ENCODE measurements at regions of chr5 and their contacts with region 1.

Region 1: GRCh38 chr5:95781101-95781583 is 41.4 kb downstream of the GLRX start:
- DNase-seq: peak; percentile 57 to 87 (median 66)
- ATAC-seq: peak; percentile 94
- H3K4me3 ChIP-seq: no peak overlapping the region
- H3K4me3 Mint-ChIP-seq: peak overlapping the region; percentile 68
- H3K27ac ChIP-seq: no peak overlapping the region
- H3K27ac Mint-ChIP-seq: peak overlapping the region; percentile 26
- H3K4me1 ChIP-seq: no peaks in the 10 kb centered on the region
- H3K4me1 Mint-ChIP-seq: peaks cover 5% of the 10 kb centered on the region
- H3K27me3 ChIP-seq: no peaks in the 10 kb centered on the region
- H3K27me3 Mint-ChIP-seq: no peaks in the 10 kb centered on the region
- CTCF ChIP-seq: peak; percentile 100

Region 2: GRCh38 chr5:94945656-94946055 is 835.5 kb before region 1 on chr5:
- CTCF ChIA-PET with region 1: no interaction called
- POLR2A ChIA-PET with region 1: no interaction called
- intact Hi-C with region 1: no loop called
- DNase-seq: peak in 1 of 14 experiments; percentile 5
- ATAC-seq: no peak
- H3K4me3 ChIP-seq: no peak overlapping the region
- H3K4me3 Mint-ChIP-seq: no peak overlapping the region
- H3K27ac ChIP-seq: no peak overlapping the region
- H3K27ac Mint-ChIP-seq: no peak overlapping the region
- H3K4me1 ChIP-seq: no peaks in the 10 kb centered on the region
- H3K4me1 Mint-ChIP-seq: no peaks in the 10 kb centered on the region
- H3K27me3 ChIP-seq: no peaks in the 10 kb centered on the region
- H3K27me3 Mint-ChIP-seq: no peaks in the 10 kb centered on the region
- CTCF ChIP-seq: no peak

Region 3: DNA sequence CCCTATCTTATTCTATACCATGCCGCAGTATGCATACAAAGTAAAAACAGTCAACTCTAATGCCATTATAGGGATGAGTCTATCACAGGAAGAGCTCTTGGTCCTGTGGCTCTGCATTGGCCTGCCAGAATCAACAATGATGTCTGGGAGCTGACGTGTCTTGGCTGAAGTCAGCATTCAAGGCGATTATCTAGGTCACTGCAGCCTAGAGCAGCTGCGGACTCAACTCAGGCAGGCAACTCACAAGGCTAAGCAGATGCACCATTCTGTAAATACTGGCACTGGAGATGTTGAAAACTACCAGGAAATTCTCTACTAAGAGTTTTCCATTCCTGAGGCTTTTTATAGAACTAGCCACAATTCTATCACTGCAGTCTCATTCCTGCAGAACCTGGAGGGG is 111.6 kb before region 1 on chr5:
- CTCF ChIA-PET with region 1: interaction called, 4 read pairs
- POLR2A ChIA-PET with region 1: interaction called, 4 read pairs
- intact Hi-C with region 1: loop called (anchors 2 to 5 kb)
- DNase-seq: no peak
- ATAC-seq: no peak
- H3K4me3 ChIP-seq: no peak overlapping the region
- H3K4me3 Mint-ChIP-seq: no peak overlapping the region
- H3K27ac ChIP-seq: no peak overlapping the region
- H3K27ac Mint-ChIP-seq: no peak overlapping the region
- H3K4me1 ChIP-seq: no peaks in the 10 kb centered on the region
- H3K4me1 Mint-ChIP-seq: no peaks in the 10 kb centered on the region
- H3K27me3 ChIP-seq: no peaks in the 10 kb centered on the region
- H3K27me3 Mint-ChIP-seq: no peaks in the 10 kb centered on the region
- CTCF ChIP-seq: no peak

Region 4: DNA sequence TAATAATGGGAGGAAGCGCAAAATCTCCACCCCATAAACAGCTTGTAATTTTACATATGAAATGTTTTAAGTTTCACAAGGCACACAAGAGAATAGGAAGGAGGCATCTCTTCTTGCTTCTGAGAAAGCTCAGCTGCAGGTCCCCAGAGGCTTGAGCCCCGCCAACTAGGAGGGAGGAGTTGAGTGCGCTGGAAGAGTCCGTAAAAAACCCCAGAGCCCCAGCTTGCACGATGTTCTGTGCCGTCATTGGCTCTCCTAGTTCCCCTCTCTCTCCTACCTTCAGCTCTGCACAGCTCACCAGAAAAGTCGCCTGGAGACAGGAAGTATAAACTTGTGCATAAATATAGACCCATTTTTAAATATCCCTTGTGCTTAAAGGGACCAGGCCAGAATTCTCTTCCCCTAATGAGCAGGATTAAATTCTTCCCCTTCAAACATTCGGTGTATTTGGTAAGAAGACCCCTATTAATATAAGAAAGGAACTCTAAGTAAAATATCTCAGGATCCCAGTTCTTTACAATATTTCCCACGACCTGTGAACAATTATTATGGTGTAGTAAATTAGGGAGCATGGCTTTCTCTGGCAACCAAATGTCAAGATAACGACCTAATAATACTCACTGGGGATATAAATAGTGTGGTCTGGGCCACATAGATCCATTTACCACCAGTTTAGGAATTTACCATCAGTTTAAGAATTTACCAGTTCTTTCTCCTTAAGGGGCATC is 27.7 kb after region 1 on chr5:
- CTCF ChIA-PET with region 1: interaction called, 28 read pairs
- POLR2A ChIA-PET with region 1: interaction called, 14 read pairs
- intact Hi-C with region 1: no loop called
- DNase-seq: peak; percentile 59 to 94 (median 76)
- ATAC-seq: peak; percentile 100
- H3K4me3 ChIP-seq: peak overlapping the region; percentile 9
- H3K4me3 Mint-ChIP-seq: peak overlapping the region; percentile 26
- H3K27ac ChIP-seq: peak overlapping the region; percentile 63 to 79
- H3K27ac Mint-ChIP-seq: peak overlapping the region; percentile 76
- H3K4me1 ChIP-seq: peaks cover 59% of the 10 kb centered on the region
- H3K4me1 Mint-ChIP-seq: peaks cover 65% of the 10 kb centered on the region
- H3K27me3 ChIP-seq: no peaks in the 10 kb centered on the region
- H3K27me3 Mint-ChIP-seq: no peaks in the 10 kb centered on the region
- CTCF ChIP-seq: no peak

Region 5: GRCh38 chr5:95846554-95847260 is 65.6 kb after region 1 on chr5:
- CTCF ChIA-PET with region 1: interaction called, 79 read pairs
- POLR2A ChIA-PET with region 1: interaction called, 16 read pairs
- intact Hi-C with region 1: loop called (anchors 1 kb)
- DNase-seq: peak; percentile 54 to 87 (median 61)
- ATAC-seq: peak; percentile 82
- H3K4me3 ChIP-seq: no peak overlapping the region
- H3K4me3 Mint-ChIP-seq: no peak overlapping the region
- H3K27ac ChIP-seq: no peak overlapping the region
- H3K27ac Mint-ChIP-seq: no peak overlapping the region
- H3K4me1 ChIP-seq: peaks cover 20% of the 10 kb centered on the region
- H3K4me1 Mint-ChIP-seq: peaks cover 15% of the 10 kb centered on the region
- H3K27me3 ChIP-seq: peaks cover 0 to 3% of the 10 kb centered on the region in 2 experiments
- H3K27me3 Mint-ChIP-seq: no peaks in the 10 kb centered on the region
- CTCF ChIP-seq: peak; percentile 95

Region 6: GRCh38 chr5:96331210-96331609 is 550.1 kb after region 1 on chr5:
- CTCF ChIA-PET with region 1: interaction called, 6 read pairs
- POLR2A ChIA-PET with region 1: no interaction called
- intact Hi-C with region 1: loop called (anchors 2 to 5 kb)
- DNase-seq: peak in 2 of 14 experiments; percentile 17 to 18
- ATAC-seq: no peak
- H3K4me3 ChIP-seq: no peak overlapping the region
- H3K4me3 Mint-ChIP-seq: no peak overlapping the region
- H3K27ac ChIP-seq: no peak overlapping the region
- H3K27ac Mint-ChIP-seq: no peak overlapping the region
- H3K4me1 ChIP-seq: no peaks in the 10 kb centered on the region
- H3K4me1 Mint-ChIP-seq: no peaks in the 10 kb centered on the region
- H3K27me3 ChIP-seq: no peaks in the 10 kb centered on the region
- H3K27me3 Mint-ChIP-seq: peaks cover 33% of the 10 kb centered on the region
- CTCF ChIP-seq: no peak